ENCODE measurements at regions of chr19 and their contacts with region 1.

Region 1: DNA sequence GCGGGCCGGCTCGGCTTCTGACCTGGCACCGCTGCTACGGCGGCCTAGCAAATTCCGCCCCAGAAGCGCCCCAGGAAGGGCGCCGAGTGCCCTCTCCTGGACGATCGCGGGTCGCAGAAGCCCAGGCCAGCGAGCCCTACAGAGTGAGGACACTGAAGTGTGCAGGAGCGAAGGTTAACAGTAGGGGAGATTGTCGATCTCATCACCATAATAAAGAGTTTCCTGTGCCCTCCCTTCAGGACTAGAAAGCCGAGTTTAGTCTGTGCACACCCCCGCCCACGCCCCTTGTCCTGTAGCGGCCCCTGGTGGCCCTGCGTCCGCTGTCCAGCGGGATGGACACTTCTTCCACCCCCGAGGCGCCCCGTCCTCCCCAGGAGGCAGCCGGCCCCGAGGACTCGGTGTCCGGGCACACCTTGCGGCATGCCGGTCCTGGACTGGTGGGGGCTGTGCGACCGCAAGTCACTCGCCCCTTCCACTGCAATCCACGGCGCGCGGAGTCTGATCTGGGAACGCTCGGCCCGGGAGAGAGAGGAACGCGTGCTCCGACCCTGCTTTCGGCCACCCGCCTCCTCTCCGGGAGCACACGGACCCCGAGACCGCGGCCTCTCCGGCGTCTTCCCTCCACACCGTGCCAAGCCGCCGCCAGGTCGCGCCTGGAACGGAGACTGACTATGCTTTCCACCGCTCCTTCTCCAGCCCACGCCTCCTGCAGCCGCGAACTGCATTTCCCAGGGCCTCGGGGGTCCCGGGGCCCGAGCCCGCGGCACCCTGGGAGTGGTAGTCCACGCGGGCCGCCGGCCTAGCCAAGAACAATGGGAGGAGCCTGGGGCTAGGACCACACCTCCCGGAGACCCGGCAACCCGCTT is 769 bp upstream of the KMT2B start:
- DNase-seq: peak; percentile 75 to 82
- ATAC-seq: peak; percentile 82 to 84
- H3K4me3 ChIP-seq: peak overlapping the region; percentile 92 to 99 (median 96)
- H3K27ac ChIP-seq: peak overlapping the region; percentile 84 to 95 (median 92)
- H3K4me1 ChIP-seq: peaks cover 21 to 25% of the 10 kb centered on the region in 2 donors
- H3K27me3 ChIP-seq: no peaks in the 10 kb centered on the region
- CTCF ChIP-seq: peak; percentile 97 to 99 (median 98)
- POLR2A ChIP-seq: peak; percentile 45 to 48

Region 2: DNA sequence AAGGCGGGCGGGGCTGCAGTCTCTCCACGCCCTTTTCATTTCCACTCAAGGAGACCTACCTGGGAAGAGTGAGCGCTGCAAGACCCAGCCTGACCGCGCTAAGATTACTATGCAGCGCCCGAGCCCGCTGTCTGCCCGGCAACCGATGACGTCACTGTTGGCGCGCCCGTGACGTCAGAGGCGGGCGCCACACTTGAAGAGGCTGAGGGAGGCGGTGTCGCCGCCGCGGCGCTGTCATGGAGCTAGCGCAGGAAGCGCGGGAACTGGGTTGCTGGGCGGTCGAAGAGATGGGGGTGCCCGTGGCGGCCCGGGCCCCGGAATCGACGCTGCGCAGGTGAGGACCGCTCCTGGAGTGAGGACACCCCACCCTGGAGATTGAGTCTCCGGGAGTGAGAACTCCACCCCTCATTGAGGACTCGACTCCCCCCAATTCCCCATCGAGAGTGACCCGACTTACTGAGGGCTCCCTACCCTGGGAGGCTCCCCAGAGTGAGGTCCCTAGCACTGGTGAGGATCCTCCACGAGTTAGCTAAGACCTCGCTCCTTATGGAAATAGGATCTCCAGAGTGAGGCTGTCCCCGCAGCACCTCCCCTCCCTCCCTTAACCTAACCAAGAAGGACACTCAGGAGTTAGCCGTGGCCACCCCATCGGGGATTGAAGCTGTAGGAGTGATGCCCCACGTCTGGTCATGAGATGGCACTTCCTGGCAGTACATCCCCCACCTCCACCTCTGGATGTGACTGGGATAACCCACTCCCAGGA is 104.3 kb before region 1 on chr19 and contains the start of gene HAUS5:
- in situ Hi-C with region 1: no loop called
- intact Hi-C with region 1: loop called (anchors 1 kb)
- DNase-seq: peak; percentile 82 to 92
- ATAC-seq: peak; percentile 97 to 99
- H3K4me3 ChIP-seq: peak within 1 kb of the TSS; percentile 78 to 90 (median 86)
- H3K27ac ChIP-seq: peak within 1 kb of the TSS; percentile 67 to 75 (median 72)
- H3K4me1 ChIP-seq: peaks cover 5 to 15% of the 10 kb centered on the region in 2 donors
- H3K27me3 ChIP-seq: no peaks in the 10 kb centered on the region
- CTCF ChIP-seq: peak in 2 of 5 experiments; percentile 16 to 43
- POLR2A ChIP-seq: no peak
- total RNA-seq, gene HAUS5: 2.5 to 4.8 (median 3.4) TPM

Region 3: DNA sequence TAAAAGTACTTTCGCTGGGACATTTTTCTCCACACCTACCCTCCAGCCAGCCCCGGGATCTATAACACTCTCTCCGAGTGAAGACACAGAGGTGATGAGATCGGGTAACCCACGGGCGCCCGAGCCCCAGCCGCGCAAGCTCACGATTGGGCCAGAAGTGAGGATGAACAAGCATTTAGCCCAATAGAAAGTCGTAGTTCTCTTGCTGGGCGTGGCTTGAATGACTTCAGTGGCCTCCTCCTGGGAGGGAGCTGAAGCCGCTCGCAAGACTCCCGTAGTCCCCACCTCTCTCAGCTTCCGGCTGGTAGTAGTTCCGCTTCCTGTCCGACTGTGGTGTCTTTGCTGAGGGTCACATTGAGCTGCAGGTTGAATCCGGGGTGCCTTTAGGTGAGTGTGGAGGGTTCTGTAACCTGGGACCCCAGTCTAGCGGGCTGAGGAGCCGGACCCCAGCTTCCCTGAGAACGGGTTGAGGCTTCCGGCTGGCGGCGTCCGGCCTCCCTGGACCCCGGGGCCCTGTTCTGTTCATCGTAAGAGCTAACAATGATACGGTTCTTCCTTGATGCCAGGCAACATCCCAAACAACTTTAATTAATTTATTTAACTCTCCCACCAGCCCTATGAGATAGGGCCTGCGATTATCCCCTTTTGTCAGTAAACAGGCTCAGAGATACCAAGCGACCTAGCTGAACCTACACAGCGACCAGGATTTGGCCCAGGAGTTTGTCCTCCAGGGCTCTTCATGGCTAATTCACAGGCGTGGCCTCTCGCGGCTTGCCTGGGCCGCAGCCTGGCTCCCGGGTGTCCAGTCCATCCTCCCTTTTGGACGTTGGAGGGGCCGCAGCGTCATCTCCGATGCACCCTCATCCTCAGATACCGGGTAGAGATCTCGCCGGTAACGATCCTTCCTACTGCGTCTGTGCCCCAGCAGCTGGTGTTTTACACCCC is 68.7 kb before region 1 on chr19 and contains the start of gene COX6B1:
- in situ Hi-C with region 1: no loop called
- intact Hi-C with region 1: loop called (anchors 2 kb)
- DNase-seq: peak; percentile 97 to 98
- ATAC-seq: peak; percentile 94
- H3K4me3 ChIP-seq: peak within 1 kb of the TSS; percentile 74 to 98 (median 90)
- H3K27ac ChIP-seq: peak within 1 kb of the TSS; percentile 92 to 98 (median 94)
- H3K4me1 ChIP-seq: peaks cover 23 to 32% of the 10 kb centered on the region in 2 donors
- H3K27me3 ChIP-seq: no peaks in the 10 kb centered on the region
- CTCF ChIP-seq: no peak
- POLR2A ChIP-seq: peak; percentile 76 to 85
- total RNA-seq, gene COX6B1: 899 to 1,245 (median 976) TPM

Region 4: GRCh38 chr19:35702223-35703012 is 14.6 kb before region 1 on chr19:
- in situ Hi-C with region 1: no loop called
- intact Hi-C with region 1: loop called (anchors 1 kb)
- DNase-seq: peak; percentile 94 to 96
- ATAC-seq: peak; percentile 100
- H3K4me3 ChIP-seq: peak overlapping the region; percentile 76 to 93 (median 84)
- H3K27ac ChIP-seq: peak overlapping the region; percentile 71 to 82 (median 79)
- H3K4me1 ChIP-seq: no peaks in the 10 kb centered on the region
- H3K27me3 ChIP-seq: no peaks in the 10 kb centered on the region
- CTCF ChIP-seq: no peak
- POLR2A ChIP-seq: peak; percentile 34 to 45

Region 5: DNA sequence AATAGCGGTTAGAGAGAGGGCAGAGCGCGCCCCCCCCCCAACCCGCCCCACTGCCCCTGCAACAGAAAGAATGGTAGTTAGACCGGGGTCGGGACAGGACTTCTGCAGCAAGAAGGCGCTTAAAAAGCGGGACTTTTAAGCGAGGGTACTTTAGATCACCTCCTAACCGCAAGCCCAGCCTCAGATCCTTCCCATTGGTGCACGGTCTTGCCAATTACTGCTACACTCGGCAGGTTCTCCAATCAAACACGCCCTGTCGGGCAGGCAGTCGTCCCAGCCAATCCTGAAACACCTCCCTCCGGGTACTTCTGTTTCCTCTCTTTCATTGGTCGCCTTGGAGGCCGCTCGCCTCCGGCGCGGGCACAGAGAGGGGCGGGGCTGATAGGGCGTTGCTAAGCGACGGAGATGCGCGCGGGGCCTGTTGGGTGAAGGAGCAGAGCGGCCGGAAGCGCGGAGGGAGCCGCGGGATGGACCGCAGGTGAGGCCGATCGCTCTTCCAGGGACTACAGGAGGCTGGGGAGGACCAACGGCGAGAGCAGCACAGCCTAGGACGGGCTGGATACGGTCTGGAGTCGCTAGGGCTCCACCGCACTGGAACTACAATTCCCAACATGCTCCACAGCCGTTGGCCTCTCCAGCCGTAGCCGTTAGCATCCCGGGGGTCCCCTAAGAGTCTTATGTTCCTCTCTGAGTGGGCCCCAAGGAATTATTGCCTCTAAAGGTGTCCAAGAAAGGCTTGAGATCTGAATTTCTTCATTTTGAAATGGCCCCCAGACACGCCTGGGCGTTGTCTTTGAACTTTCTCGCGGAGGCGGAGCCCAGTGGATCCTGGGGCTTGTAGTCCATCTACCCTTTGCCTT is 40.9 kb after region 1 on chr19 and contains the start of gene PROSER3:
- in situ Hi-C with region 1: no loop called
- intact Hi-C with region 1: loop called (anchors 1 kb)
- DNase-seq: peak; percentile 99 to 100
- ATAC-seq: peak; percentile 85 to 91
- H3K4me3 ChIP-seq: peak within 1 kb of the TSS; percentile 72 to 84 (median 76)
- H3K27ac ChIP-seq: peak within 1 kb of the TSS; percentile 89 to 97 (median 95)
- H3K4me1 ChIP-seq: peaks cover 28 to 43% of the 10 kb centered on the region in 2 donors
- H3K27me3 ChIP-seq: no peaks in the 10 kb centered on the region
- CTCF ChIP-seq: no peak
- POLR2A ChIP-seq: peak; percentile 56 to 82
- total RNA-seq, gene PROSER3: 0.63 to 4.3 (median 3.0) TPM

Region 6: DNA sequence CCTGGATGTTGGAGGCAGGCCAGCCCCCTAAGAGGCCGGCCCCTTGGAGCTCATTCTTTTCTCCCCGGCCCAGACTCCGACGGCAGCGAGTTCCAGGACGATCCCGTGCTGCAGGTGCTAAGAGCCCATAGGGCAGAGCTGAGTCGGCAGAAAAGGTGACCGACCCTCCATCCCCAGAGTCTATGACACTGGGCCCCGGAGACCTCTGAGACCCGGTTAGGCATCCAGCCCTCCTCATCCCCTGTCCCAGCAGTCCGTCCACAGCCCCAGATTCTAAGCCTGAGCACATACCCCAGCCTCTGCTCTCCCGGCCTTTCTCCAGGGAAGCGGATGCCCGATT is 51.0 kb after region 1 on chr19:
- in situ Hi-C with region 1: no loop called
- intact Hi-C with region 1: no loop called
- DNase-seq: no peak
- ATAC-seq: no peak
- H3K4me3 ChIP-seq: no peak overlapping the region
- H3K27ac ChIP-seq: no peak overlapping the region
- H3K4me1 ChIP-seq: no peaks in the 10 kb centered on the region
- H3K27me3 ChIP-seq: no peaks in the 10 kb centered on the region
- CTCF ChIP-seq: no peak
- POLR2A ChIP-seq: no peak

Measured in gastrocnemius medialis (tissue), 4 donors.